Mammary epithelial cell (primary cell): ENCODE measurements at regions of chr12 and their contacts with region 1.

Region 1: GRCh38 chr12:7092229-7092985 is at the start of gene C1R:
- DNase-seq: peak; percentile 48
- H3K4me3 ChIP-seq: peak within 1 kb of the TSS; percentile 27 to 46 (median 45)
- H3K27ac ChIP-seq: no peak within 1 kb of the TSS
- H3K4me1 ChIP-seq: peaks cover 9% of the 10 kb centered on the region
- H3K27me3 ChIP-seq: no peaks in the 10 kb centered on the region
- CTCF ChIP-seq: peak; percentile 84 to 87
- total RNA-seq, gene C1R: 6.1 to 16.3 TPM

Region 2: DNA sequence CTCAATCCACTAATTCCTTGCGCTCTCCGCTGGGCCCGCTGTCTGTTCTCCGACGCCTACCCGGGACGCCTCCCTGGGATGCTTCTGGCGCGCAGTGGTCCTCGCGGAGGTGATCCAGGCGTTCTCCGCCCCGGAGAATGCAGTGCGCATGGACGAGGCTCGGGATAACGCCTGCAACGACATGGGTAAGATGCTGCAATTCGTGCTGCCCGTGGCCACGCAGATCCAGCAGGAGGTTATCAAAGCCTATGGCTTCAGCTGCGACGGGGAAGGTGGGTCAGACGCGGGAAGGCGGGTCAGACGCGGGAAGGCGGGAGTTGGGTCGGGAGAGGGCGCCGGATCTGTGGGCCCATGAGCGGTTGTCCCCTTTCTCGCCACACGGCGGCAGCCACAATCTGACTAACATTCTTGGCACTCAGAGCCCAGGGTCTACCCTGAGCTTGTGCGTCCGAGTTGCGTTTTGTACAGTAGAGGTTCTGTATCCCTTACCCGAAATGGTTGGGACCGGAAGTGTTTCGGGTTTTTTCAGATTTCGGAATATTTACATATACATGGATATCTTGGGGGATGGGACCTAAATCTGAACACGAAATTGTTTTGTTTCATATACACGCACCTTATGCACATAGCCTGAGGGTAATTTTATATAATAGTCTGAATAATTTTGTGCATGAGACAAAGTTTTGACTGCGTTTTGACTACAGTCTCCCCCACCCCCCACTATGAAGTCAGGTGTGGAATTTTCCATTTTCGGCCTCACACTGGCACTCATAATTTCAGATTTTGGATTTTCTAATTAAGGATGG is 147.8 kb before region 1 on chr12:
- CTCF ChIA-PET with region 1: interaction called, 4 read pairs
- dilution Hi-C with region 1: no loop called
- in situ Hi-C with region 1: loop called in 1 of 2 experiments (anchors 10 kb)
- intact Hi-C with region 1: loop called (anchors 1 kb)
- DNase-seq: no peak
- H3K4me3 ChIP-seq: peak overlapping the region; percentile 36 to 64 (median 47)
- H3K27ac ChIP-seq: peak overlapping the region; percentile 94
- H3K4me1 ChIP-seq: peaks cover 29% of the 10 kb centered on the region
- H3K27me3 ChIP-seq: no peaks in the 10 kb centered on the region
- CTCF ChIP-seq: peak; percentile 55 to 77

Region 3: DNA sequence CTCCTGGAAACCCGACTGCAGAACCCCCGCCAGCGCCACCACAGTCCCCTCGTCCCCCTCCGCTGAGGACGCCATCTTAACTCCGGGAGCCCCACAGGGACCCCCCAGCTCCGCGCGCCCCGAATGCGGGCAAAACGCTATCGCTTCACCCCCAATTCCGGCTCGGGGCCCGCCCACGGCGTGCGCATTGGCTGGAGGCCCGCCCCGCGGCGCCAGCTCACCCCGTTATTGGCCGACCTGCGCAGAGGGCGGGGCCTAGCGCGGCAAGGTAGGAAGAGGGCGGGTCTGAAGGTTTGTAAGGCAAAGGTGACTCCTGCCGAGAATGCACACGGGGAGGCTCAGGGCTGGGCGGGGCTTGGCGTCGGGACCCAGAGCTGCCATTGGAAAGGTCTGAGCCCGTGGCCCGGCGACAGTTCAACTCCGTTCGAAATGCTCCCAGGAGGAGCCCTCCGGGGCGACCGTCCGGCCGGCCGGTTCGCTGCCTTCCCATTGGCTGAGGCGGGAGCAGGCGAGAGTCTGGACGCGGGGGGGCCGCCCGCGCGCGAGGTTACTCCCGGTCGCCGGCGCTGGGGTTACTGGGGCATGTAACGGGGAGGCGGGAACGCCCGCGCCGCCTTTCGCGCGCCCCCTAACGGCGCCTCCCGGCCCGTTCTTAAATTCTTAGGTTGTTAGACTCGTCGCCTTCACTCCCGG is 73.9 kb before region 1 on chr12 and contains the start of gene LPCAT3:
- CTCF ChIA-PET with region 1: interaction called, 11 read pairs
- dilution Hi-C with region 1: no loop called
- in situ Hi-C with region 1: no loop called
- intact Hi-C with region 1: loop called (anchors 1 kb)
- DNase-seq: peak; percentile 96
- H3K4me3 ChIP-seq: peak within 1 kb of the TSS; percentile 81 to 95 (median 84)
- H3K27ac ChIP-seq: peak within 1 kb of the TSS; percentile 38
- H3K4me1 ChIP-seq: peaks cover 20% of the 10 kb centered on the region
- H3K27me3 ChIP-seq: no peaks in the 10 kb centered on the region
- CTCF ChIP-seq: peak; percentile 55 to 91
- total RNA-seq, gene LPCAT3: 22.8 to 31.3 TPM

Region 4: DNA sequence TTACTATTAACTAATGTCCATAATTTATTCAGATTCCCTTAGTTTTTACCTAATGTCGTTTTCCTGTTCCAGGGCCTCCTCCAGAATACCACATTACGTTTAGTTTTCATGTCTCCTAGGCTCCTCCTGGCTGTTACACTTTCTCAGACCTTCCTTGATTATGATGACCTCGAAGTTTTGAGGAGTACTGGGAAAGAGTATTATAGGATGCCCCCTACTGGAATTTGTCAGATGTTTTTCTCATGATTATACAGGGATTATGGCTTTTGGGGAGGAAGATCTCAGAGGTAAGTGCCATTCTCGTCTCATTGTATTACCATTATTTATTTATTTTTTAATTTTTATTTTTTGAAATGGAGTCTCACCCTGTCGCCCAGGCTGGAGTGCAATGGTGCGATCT is 49.6 kb before region 1 on chr12:
- CTCF ChIA-PET with region 1: no interaction called
- dilution Hi-C with region 1: no loop called
- in situ Hi-C with region 1: no loop called
- intact Hi-C with region 1: loop called (anchors 10 kb)
- DNase-seq: peak; percentile 52
- H3K4me3 ChIP-seq: no peak overlapping the region
- H3K27ac ChIP-seq: no peak overlapping the region
- H3K4me1 ChIP-seq: peaks cover 13% of the 10 kb centered on the region
- H3K27me3 ChIP-seq: no peaks in the 10 kb centered on the region
- CTCF ChIP-seq: peak; percentile 40 to 56

Region 5: DNA sequence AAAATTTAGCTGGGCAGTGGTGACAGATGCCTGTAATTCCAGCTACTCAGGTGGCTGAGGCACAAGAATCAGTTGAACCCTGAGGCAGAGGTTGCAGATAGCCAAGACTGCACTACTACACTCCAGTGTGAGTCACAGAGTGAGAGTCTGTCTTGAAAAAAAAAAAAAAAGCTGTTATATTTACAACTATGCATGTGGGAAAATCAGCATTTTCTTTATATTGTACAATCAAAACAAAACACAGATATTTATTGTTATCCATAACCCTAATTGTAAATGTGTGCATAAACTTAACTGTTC is 12.6 kb before region 1 on chr12:
- CTCF ChIA-PET with region 1: no interaction called
- dilution Hi-C with region 1: no loop called
- in situ Hi-C with region 1: no loop called
- intact Hi-C with region 1: loop called (anchors 2 kb)
- DNase-seq: peak; percentile 82
- H3K4me3 ChIP-seq: peak overlapping the region in 2 of 3 experiments; percentile 19
- H3K27ac ChIP-seq: peak overlapping the region; percentile 83
- H3K4me1 ChIP-seq: peaks cover 7% of the 10 kb centered on the region
- H3K27me3 ChIP-seq: no peaks in the 10 kb centered on the region
- CTCF ChIP-seq: no peak

Region 6: DNA sequence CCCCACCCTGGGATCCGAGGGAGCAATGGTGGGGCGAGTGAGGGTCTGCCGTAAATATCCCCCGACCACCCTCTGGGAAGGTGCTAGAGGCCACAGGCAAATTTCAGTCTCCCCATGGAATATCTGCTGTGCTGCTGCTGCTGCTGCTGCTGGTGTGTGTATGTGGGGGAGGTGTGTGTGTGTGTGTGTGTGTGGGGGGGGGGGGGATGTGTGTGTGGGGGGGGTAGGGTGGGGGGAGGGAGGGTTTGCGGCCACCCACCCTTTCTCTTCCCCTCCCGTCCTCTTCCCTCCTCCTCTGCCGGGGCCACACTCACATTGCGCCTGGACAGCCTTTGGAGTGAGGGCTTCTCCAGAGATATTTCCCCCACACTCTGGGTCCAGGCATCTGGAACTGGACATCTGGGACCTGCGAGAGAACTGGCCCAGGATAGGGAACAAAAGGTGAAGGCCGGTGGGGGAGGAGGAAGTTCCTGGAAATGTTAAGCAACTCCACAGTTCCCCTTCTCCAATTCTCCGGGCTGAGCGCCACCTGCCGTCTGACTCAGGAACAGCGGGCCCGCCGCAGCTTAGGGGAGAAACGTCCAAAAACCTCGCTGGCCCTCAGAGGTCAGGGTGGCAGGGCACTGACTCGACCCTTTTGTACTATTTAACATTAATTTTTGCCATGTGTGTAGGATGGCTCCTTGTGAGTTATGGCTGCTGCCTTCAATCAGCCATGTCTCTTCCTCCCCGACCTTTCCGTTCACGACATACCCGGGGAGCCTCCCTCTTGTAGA is 16.6 kb after region 1 on chr12 and contains the start of gene C1RL:
- CTCF ChIA-PET with region 1: no interaction called
- dilution Hi-C with region 1: no loop called
- in situ Hi-C with region 1: no loop called
- intact Hi-C with region 1: loop called (anchors 1 kb)
- DNase-seq: peak; percentile 75
- H3K4me3 ChIP-seq: peak within 1 kb of the TSS; percentile 75 to 80 (median 76)
- H3K27ac ChIP-seq: peak within 1 kb of the TSS; percentile 81
- H3K4me1 ChIP-seq: peaks cover 23% of the 10 kb centered on the region
- H3K27me3 ChIP-seq: no peaks in the 10 kb centered on the region
- CTCF ChIP-seq: peak; percentile 96 to 99
- total RNA-seq, gene C1RL: 32.1 to 38.3 TPM

Region 7: GRCh38 chr12:7162691-7163114 is 70.3 kb after region 1 on chr12:
- CTCF ChIA-PET with region 1: no interaction called
- dilution Hi-C with region 1: no loop called
- in situ Hi-C with region 1: no loop called
- intact Hi-C with region 1: loop called (anchors 2 kb)
- DNase-seq: peak; percentile 58
- H3K4me3 ChIP-seq: no peak overlapping the region
- H3K27ac ChIP-seq: no peak overlapping the region
- H3K4me1 ChIP-seq: peaks cover 2% of the 10 kb centered on the region
- H3K27me3 ChIP-seq: no peaks in the 10 kb centered on the region
- CTCF ChIP-seq: peak; percentile 80 to 92

Region 8: DNA sequence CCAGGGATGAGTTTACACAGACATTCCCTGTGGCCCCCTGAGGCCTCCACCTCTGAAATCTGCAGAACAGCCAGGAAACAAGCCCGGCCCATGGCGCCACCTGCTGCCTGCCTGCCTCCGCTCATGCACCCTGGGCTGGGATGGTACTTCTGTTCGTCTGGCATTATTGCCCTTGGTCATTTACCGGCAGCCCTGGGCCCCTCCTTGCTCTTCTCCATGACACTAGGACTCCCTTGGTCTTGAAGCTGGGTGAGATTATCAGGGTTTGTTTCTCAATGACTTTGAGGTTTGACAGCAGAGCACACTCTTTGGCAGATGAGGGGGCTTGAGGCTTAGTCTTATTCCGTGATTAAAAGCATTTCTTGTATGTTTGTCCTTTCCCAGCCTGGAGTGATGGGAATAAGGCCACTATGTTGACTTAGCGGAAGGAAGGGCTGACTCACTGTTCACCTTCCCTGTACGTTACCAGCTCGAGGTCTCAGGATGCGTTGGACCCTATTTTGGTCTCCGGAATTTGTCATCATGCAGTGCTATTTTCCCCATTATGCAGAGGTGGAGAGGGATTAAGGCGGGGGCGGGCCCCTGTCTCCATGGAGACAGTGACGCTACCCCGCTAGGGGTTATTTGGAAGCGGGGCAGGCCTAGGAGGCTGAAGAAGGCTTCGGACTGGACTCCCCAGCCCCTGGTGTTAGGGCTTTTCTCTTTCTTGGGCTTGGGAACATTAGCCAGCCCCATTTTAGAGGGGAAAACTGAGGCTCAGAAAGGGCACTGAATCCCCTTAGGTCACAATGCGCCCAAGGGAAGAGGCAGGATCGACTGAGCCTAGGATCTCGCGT is 96.4 kb after region 1 on chr12:
- CTCF ChIA-PET with region 1: no interaction called
- dilution Hi-C with region 1: no loop called
- in situ Hi-C with region 1: no loop called
- intact Hi-C with region 1: no loop called
- DNase-seq: peak; percentile 61
- H3K4me3 ChIP-seq: peak overlapping the region; percentile 45 to 99 (median 92)
- H3K27ac ChIP-seq: peak overlapping the region; percentile 76
- H3K4me1 ChIP-seq: peaks cover 18% of the 10 kb centered on the region
- H3K27me3 ChIP-seq: no peaks in the 10 kb centered on the region
- CTCF ChIP-seq: peak; percentile 73 to 92